ENCODE measurements at regions of chr17 and their contacts with region 1.

Region 1: GRCh38 chr17:77999413-78000173 is 41.1 kb downstream of the TNRC6C start:
- DNase-seq: no peak
- ATAC-seq: peak in 1 of 2 donors; percentile 31

Region 2: DNA sequence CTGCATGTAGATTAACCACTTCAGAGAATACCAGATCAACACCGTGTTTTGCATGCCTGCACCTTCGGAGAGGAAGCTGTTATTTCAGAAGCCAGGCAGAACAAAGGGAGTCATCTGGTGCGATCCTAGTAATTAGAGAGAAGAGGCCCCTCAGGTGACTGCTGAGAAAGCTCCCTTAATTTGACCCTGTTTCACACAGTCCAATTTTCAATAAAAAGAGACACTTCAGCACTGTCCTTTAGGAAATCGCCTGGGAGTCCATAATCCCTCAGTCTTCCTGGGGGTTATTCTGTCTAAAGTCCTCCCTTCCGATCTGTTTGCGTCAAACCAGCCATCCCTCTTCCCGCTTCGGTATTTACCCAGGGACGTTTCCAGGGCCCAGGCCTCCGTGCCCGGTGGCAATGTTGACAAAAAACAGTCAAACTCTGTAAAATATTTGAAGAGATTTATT is 64.4 kb before region 1 on chr17:
- intact Hi-C with region 1: no loop called
- DNase-seq: no peak
- ATAC-seq: no peak

Region 3: DNA sequence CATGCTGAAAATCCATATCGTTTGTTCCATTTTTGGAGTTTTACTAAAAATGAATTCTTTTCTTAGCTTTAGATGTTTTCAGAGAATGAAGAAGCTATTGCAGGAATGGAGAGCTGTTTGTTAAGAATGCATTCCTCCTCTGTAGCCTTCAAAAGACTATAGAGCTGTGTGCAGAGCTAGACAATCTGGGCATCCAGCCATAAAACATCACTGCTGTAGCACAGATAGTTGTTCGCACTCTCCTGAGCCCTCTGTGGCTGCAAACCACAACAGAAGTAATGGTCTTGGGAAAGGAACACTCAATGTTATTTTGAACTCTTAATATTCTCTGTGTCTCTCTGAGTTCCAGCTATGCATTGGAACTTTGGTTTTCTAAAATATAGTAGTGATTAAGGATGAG is 36.2 kb before region 1 on chr17:
- intact Hi-C with region 1: loop called in 1 of 2 experiments (anchors 5 kb)
- DNase-seq: peak; percentile 53
- ATAC-seq: peak; percentile 58 to 76

Region 4: DNA sequence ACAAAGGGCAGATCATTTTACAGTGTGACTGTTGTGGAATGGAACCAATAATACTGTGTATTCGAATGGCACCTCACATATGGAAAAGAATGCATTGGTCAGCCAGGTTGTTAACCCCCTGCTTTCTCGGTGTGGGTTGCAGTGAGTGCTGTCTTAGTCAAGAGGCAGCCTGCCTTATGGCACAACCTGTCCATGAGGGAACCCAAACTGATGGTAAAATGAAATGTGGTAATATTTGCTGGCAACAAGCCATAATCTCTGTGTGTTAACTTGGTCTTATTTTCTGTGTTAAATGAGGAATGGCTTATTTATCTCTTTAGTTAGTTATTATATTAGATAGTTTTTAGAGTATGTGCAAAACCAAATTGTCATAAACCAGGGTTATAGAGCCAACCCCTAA is 47.3 kb after region 1 on chr17:
- intact Hi-C with region 1: no loop called
- DNase-seq: no peak
- ATAC-seq: no peak

Region 5: DNA sequence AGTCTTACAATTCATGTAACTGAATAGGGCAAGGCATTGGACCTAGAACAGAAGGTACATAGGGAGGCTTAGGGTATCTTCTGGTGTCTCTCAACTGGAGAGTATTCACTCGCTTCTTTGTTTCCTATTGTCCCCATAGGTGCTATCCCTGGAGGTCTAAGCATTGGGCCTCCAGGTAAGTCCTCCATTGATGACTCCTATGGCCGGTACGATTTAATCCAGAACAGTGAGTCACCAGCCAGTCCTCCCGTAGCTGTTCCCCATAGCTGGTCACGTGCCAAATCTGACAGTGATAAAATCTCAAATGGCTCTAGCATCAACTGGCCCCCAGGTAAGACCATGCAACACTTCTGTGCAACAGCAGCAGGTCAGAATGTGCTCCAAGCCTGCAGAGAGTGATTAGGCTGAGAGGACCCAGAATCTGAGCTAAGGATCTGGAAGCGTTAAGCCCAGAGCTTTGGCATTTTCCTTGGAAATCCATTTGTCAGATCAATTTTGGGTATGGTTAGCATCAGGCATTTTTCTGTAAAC is 93.3 kb after region 1 on chr17:
- intact Hi-C with region 1: no loop called
- DNase-seq: no peak
- ATAC-seq: no peak

Measured in left cardiac atrium (tissue), 4 donors.